Naive thymus-derived CD4-positive, alpha-beta T cell (primary cell): ENCODE measurements at regions of chr5 and their contacts with region 1.

Region 1: GRCh38 chr5:151252762-151253604 is at the start of gene GM2A:
- DNase-seq: peak; percentile 91 to 98 (median 96)
- ATAC-seq: peak; percentile 97
- H3K4me3 ChIP-seq: peak within 1 kb of the TSS; percentile 93
- H3K4me3 Mint-ChIP-seq: peak within 1 kb of the TSS; percentile 82 to 97 (median 94)
- H3K27ac ChIP-seq: peak within 1 kb of the TSS; percentile 78
- H3K27ac Mint-ChIP-seq: peak within 1 kb of the TSS; percentile 74 to 96 (median 95)
- H3K4me1 ChIP-seq: peaks cover 11 to 21% of the 10 kb centered on the region in 2 donors
- H3K4me1 Mint-ChIP-seq: peaks cover 30 to 50% (median 47%) of the 10 kb centered on the region in 7 donors
- H3K27me3 ChIP-seq: no peaks in the 10 kb centered on the region
- H3K27me3 Mint-ChIP-seq: no peaks in the 10 kb centered on the region
- total RNA-seq, gene GM2A: 11.1 to 45.6 (median 16.9) TPM

Region 2: DNA sequence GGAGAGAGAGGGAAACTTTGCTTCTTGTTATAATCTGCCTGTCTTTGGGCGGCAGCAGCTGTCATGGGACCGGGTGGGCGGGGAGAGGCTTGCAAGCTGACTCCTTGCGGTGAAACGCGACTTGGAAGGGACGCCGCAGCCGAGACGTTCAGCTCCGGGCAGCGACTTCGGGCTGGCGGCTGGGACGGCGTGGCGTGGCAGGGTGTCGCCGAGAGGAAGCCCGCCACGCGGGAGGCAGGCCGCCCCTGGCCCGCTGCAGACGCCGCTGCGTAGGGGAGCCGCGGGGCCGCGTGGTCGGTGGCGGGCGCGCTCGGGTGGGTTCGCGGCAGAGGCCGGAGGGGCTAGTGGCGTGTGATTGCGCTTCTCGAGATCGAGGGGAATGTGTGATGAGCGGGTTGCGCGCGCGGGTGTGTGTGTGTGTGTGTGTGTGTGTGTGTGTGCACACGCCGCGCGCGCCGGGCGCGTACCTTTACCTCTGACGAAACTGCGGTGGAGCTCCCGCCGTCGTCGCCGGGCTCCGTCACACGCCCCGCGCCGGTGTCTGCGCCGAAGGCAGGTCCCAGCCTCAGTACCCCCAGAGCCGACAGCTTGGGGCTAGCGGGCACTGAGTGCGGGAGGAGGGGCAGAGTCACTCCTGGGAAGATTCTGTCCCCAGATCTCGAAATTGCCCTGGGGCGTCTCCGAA is 1521.2 kb before region 1 on chr5:
- CTCF ChIA-PET with region 1: no interaction called
- POLR2A ChIA-PET with region 1: no interaction called
- intact Hi-C with region 1: loop called in 1 of 2 experiments (anchors 2 kb)
- DNase-seq: peak; percentile 52 to 84 (median 67)
- ATAC-seq: peak; percentile 64
- H3K4me3 ChIP-seq: peak overlapping the region; percentile 84
- H3K4me3 Mint-ChIP-seq: peak overlapping the region; percentile 77 to 92 (median 87)
- H3K27ac ChIP-seq: peak overlapping the region; percentile 67
- H3K27ac Mint-ChIP-seq: peak overlapping the region in 8 of 9 donors; percentile 38 to 93 (median 78)
- H3K4me1 ChIP-seq: no peaks in the 10 kb centered on the region
- H3K4me1 Mint-ChIP-seq: peaks cover 0 to 17% (median 8%) of the 10 kb centered on the region in 7 donors
- H3K27me3 ChIP-seq: no peaks in the 10 kb centered on the region
- H3K27me3 Mint-ChIP-seq: peaks cover 0 to 18% (median 0%) of the 10 kb centered on the region in 5 donors

Region 3: DNA sequence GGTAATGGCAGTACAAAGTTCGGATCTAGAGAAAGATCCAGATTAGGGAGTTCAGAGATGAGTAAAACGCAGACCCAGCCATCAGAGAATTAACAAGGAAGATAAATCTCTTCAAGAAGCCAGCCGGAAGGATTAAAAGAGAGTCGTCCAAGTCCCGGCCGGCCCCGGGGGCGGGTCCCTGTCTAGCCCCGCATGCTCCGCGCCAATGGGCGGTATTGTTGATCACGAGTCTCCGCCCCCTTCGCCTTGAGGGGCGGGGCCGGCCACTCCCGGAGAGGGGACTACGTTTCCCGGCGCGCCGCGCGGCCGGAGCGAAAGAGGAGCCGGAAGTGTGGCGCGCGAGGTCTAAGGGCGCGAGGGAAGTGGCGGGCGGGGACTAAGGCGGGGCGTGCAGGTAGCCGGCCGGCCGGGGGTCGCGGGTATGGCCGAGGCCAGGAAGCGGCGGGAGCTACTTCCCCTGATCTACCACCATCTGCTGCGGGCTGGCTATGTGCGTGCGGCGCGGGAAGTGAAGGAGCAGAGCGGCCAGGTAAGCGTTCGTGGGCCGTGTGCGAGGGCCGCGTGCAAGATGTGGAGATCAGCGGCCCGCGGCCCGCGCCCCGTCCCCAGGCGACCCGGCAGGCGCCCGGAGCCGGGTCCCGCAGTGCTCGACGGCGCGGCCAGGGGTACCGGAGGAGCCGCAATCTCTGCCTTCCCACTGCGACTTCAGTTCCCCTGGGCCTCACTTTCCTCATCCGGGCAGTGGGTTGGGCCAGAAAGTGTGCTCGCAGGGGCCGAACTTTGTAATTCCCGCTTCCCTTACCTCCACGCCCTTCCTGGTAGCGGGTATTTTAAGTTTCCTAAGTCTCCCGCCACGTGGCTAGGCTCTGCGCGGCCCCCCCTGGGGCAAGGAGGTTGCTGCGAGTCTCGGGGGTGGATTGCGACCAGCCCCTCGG is 895.4 kb before region 1 on chr5 and contains the start of gene TCOF1:
- CTCF ChIA-PET with region 1: no interaction called
- POLR2A ChIA-PET with region 1: no interaction called
- intact Hi-C with region 1: loop called (anchors 1 to 2 kb)
- DNase-seq: peak; percentile 94 to 98 (median 97)
- ATAC-seq: peak; percentile 100
- H3K4me3 ChIP-seq: peak within 1 kb of the TSS; percentile 62
- H3K4me3 Mint-ChIP-seq: peak within 1 kb of the TSS; percentile 85 to 95 (median 91)
- H3K27ac ChIP-seq: peak within 1 kb of the TSS; percentile 81
- H3K27ac Mint-ChIP-seq: peak within 1 kb of the TSS; percentile 87 to 97 (median 96)
- H3K4me1 ChIP-seq: peaks cover 23 to 24% of the 10 kb centered on the region in 2 donors
- H3K4me1 Mint-ChIP-seq: peaks cover 35 to 54% (median 48%) of the 10 kb centered on the region in 7 donors
- H3K27me3 ChIP-seq: no peaks in the 10 kb centered on the region
- H3K27me3 Mint-ChIP-seq: peaks cover 0 to 2% (median 0%) of the 10 kb centered on the region in 5 donors
- total RNA-seq, gene TCOF1: 45.9 to 60.0 (median 54.6) TPM

Region 4: GRCh38 chr5:150700594-150701293 is 552.2 kb before region 1 on chr5 and contains the start of gene RBM22:
- CTCF ChIA-PET with region 1: no interaction called
- POLR2A ChIA-PET with region 1: interaction called, 4 read pairs
- intact Hi-C with region 1: loop called in 1 of 2 experiments (anchors 1 kb)
- DNase-seq: peak; percentile 77 to 93 (median 92)
- ATAC-seq: peak; percentile 96
- H3K4me3 ChIP-seq: peak within 1 kb of the TSS; percentile 80
- H3K4me3 Mint-ChIP-seq: no peak within 1 kb of the TSS
- H3K27ac ChIP-seq: peak within 1 kb of the TSS; percentile 96
- H3K27ac Mint-ChIP-seq: no peak within 1 kb of the TSS
- H3K4me1 ChIP-seq: peaks cover 13 to 14% of the 10 kb centered on the region in 2 donors
- H3K4me1 Mint-ChIP-seq: peaks cover 0 to 12% (median 7%) of the 10 kb centered on the region in 7 donors
- H3K27me3 ChIP-seq: no peaks in the 10 kb centered on the region
- H3K27me3 Mint-ChIP-seq: peaks cover 0 to 3% (median 0%) of the 10 kb centered on the region in 5 donors
- total RNA-seq, gene RBM22: 74.2 to 103 (median 93.1) TPM

Region 5: GRCh38 chr5:151080623-151081430 is 172.2 kb before region 1 on chr5 and contains the start of gene TNIP1:
- CTCF ChIA-PET with region 1: interaction called, 8 read pairs
- POLR2A ChIA-PET with region 1: no interaction called
- intact Hi-C with region 1: loop called (anchors 1 to 2 kb)
- DNase-seq: peak; percentile 86 to 99 (median 90)
- ATAC-seq: peak; percentile 94
- H3K4me3 ChIP-seq: peak within 1 kb of the TSS; percentile 86
- H3K4me3 Mint-ChIP-seq: peak within 1 kb of the TSS; percentile 85 to 95 (median 90)
- H3K27ac ChIP-seq: peak within 1 kb of the TSS; percentile 96
- H3K27ac Mint-ChIP-seq: peak within 1 kb of the TSS; percentile 86 to 95 (median 91)
- H3K4me1 ChIP-seq: peaks cover 37 to 69% of the 10 kb centered on the region in 2 donors
- H3K4me1 Mint-ChIP-seq: peaks cover 53 to 84% (median 73%) of the 10 kb centered on the region in 7 donors
- H3K27me3 ChIP-seq: no peaks in the 10 kb centered on the region
- H3K27me3 Mint-ChIP-seq: no peaks in the 10 kb centered on the region
- total RNA-seq, gene TNIP1: 124 to 234 (median 131) TPM

Region 6: DNA sequence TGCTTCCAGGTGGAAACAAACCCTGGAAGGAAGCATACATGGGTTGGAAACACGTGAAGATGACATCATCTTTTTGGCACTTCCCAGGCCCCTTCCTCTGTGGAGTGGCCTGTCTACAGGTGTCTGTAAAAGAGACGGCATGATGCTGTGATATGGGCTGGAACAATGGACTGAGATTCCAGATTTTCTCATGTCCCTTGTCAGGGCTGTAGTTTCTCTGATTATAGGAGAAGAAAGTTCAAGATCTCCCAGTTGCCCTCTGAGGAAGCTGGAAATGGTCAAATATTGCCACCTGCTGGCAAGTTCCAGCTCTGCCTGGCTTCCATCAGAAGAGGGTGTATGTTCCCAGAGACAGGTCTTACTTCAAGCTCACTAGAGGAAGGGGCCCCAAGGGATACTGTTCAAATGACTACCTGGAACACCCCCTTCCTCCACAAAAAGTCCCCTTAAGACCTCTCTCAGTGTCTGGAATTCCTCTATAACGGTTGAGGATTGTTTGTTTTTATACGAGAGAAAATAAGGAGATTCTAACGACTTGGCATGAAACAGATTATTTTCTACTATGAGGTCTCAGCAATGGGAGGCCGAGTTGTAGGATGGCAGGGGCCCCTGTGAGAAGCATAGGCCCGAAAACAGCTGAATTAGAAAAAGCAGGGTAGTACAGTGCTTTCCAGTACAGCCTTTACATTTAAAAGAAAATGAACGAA is 88.1 kb before region 1 on chr5:
- CTCF ChIA-PET with region 1: interaction called, 3 read pairs
- POLR2A ChIA-PET with region 1: interaction called, 5 read pairs
- intact Hi-C with region 1: loop called in 1 of 2 experiments (anchors 2 kb)
- DNase-seq: peak; percentile 50 to 85 (median 81)
- ATAC-seq: peak; percentile 96
- H3K4me3 ChIP-seq: no peak overlapping the region
- H3K4me3 Mint-ChIP-seq: peak overlapping the region in 1 of 10 donors; percentile 51
- H3K27ac ChIP-seq: no peak overlapping the region
- H3K27ac Mint-ChIP-seq: peak overlapping the region in 8 of 9 donors; percentile 20 to 87 (median 54)
- H3K4me1 ChIP-seq: peaks cover 0 to 8% of the 10 kb centered on the region in 2 donors
- H3K4me1 Mint-ChIP-seq: peaks cover 1 to 42% (median 28%) of the 10 kb centered on the region in 7 donors
- H3K27me3 ChIP-seq: no peaks in the 10 kb centered on the region
- H3K27me3 Mint-ChIP-seq: no peaks in the 10 kb centered on the region

Region 7: GRCh38 chr5:151239237-151239861 is 13.6 kb before region 1 on chr5:
- CTCF ChIA-PET with region 1: interaction called, 15 read pairs
- POLR2A ChIA-PET with region 1: interaction called, 7 read pairs
- intact Hi-C with region 1: no loop called
- DNase-seq: peak in 5 of 9 donors; percentile 44 to 60 (median 49)
- ATAC-seq: peak; percentile 77
- H3K4me3 ChIP-seq: no peak overlapping the region
- H3K4me3 Mint-ChIP-seq: peak overlapping the region in 1 of 10 donors; percentile 60
- H3K27ac ChIP-seq: no peak overlapping the region
- H3K27ac Mint-ChIP-seq: peak overlapping the region in 2 of 9 donors; percentile 68 to 78
- H3K4me1 ChIP-seq: peaks cover 5 to 15% of the 10 kb centered on the region in 2 donors
- H3K4me1 Mint-ChIP-seq: peaks cover 8 to 42% (median 21%) of the 10 kb centered on the region in 7 donors
- H3K27me3 ChIP-seq: no peaks in the 10 kb centered on the region
- H3K27me3 Mint-ChIP-seq: no peaks in the 10 kb centered on the region